ENCODE measurements at regions of chr4 and their contacts with region 1.

Region 1: DNA sequence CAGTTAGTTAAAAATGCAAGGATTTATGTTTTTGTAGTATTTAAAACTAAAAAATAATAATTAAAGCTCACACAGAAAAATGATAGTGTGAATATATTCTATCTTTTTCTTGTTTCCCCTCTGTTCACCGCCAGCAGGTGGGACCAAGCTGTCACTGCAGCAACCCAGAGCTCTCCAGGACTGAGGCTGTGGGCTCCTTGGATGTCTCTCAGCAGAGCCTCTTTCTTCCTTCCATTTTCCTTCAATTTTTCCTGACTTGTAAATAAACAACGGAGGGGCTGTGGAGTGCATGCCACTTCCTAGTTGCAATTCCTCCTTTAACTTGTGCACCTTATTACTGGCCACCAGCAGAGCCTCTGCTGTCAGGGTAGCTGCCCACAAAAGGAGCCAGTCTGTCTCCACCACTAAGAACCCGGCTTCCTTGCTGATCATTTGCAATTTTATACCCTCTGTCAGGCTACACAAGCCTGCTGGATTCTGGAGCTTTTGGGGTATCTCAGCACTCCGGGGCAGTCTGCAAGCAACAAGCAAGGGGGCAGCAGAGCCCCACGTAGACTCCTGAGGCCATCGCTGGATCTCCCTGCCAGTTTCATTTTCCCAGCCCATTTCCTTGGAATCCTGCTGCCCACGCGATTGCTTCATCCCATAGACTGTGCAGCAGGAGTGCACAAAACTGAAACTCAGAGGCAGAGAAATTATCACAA is 1467.4 kb downstream of the C4orf33 start:
- DNase-seq: peak; percentile 73
- H3K4me3 ChIP-seq: peak overlapping the region; percentile 25 to 69 (median 28)
- H3K27ac ChIP-seq: no peak overlapping the region
- H3K4me1 ChIP-seq: peaks cover 2% of the 10 kb centered on the region
- H3K27me3 ChIP-seq: no peaks in the 10 kb centered on the region
- CTCF ChIP-seq: peak; percentile 53 to 80
- POLR2A ChIP-seq: no peak

Region 2: GRCh38 chr4:130486841-130487240 is 76.5 kb before region 1 on chr4:
- CTCF ChIA-PET with region 1: no interaction called
- POLR2A ChIA-PET with region 1: no interaction called
- dilution Hi-C with region 1: no loop called
- intact Hi-C with region 1: no loop called
- DNase-seq: no peak
- H3K4me3 ChIP-seq: no peak overlapping the region
- H3K27ac ChIP-seq: no peak overlapping the region
- H3K4me1 ChIP-seq: no peaks in the 10 kb centered on the region
- H3K27me3 ChIP-seq: no peaks in the 10 kb centered on the region
- CTCF ChIP-seq: no peak
- POLR2A ChIP-seq: no peak

Region 3: DNA sequence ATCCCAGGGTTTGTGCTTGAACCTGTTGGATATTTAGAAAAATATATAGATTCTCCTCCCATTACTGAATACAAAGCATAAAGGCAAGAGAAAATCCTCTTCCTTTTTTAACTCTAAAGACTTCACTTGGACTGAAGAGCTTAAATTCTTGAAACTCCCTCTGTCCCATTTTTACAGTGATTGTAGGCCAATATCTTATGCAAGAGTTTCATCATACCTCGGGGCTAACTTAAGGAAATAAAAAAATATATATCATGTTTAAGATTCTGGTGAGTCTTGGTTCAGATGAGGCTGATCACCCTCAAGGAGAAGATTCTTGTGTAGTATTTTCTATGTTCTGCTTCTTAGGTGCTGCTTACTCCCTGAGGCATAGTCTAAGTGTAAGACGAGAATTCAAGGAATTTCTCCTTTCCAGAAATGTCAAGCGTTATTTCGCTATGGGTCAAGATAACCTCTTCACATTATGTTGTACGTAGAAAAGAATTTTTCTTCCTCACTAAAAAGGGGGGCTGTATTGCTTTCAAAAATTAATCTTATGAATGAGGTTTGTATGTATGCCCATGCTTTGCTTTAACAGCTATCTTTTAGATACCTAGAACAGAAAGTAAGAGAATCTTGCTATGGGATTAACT is 17.6 kb before region 1 on chr4:
- CTCF ChIA-PET with region 1: interaction called, 10 read pairs
- POLR2A ChIA-PET with region 1: no interaction called
- dilution Hi-C with region 1: no loop called
- intact Hi-C with region 1: no loop called
- DNase-seq: no peak
- H3K4me3 ChIP-seq: no peak overlapping the region
- H3K27ac ChIP-seq: no peak overlapping the region
- H3K4me1 ChIP-seq: no peaks in the 10 kb centered on the region
- H3K27me3 ChIP-seq: no peaks in the 10 kb centered on the region
- CTCF ChIP-seq: no peak
- POLR2A ChIP-seq: no peak

Region 4: GRCh38 chr4:130808492-130808891 is 245.2 kb after region 1 on chr4:
- CTCF ChIA-PET with region 1: interaction called, 33 read pairs
- POLR2A ChIA-PET with region 1: no interaction called
- dilution Hi-C with region 1: no loop called
- intact Hi-C with region 1: loop called (anchors 10 kb)
- DNase-seq: peak; percentile 41
- H3K4me3 ChIP-seq: no peak overlapping the region
- H3K27ac ChIP-seq: no peak overlapping the region
- H3K4me1 ChIP-seq: no peaks in the 10 kb centered on the region
- H3K27me3 ChIP-seq: no peaks in the 10 kb centered on the region
- CTCF ChIP-seq: peak; percentile 39 to 40
- POLR2A ChIP-seq: no peak